ENCODE measurements at regions of chr15 and their contacts with region 1.

Region 1: GRCh38 chr15:33226559-33227181 is 32.2 kb upstream of the FMN1 start:
- DNase-seq: peak; percentile 78
- ATAC-seq: peak; percentile 97
- H3K4me3 Mint-ChIP-seq: no peak overlapping the region
- H3K27ac Mint-ChIP-seq: no peak overlapping the region
- H3K4me1 Mint-ChIP-seq: peaks cover 18% of the 10 kb centered on the region
- H3K27me3 Mint-ChIP-seq: no peaks in the 10 kb centered on the region

Region 2: DNA sequence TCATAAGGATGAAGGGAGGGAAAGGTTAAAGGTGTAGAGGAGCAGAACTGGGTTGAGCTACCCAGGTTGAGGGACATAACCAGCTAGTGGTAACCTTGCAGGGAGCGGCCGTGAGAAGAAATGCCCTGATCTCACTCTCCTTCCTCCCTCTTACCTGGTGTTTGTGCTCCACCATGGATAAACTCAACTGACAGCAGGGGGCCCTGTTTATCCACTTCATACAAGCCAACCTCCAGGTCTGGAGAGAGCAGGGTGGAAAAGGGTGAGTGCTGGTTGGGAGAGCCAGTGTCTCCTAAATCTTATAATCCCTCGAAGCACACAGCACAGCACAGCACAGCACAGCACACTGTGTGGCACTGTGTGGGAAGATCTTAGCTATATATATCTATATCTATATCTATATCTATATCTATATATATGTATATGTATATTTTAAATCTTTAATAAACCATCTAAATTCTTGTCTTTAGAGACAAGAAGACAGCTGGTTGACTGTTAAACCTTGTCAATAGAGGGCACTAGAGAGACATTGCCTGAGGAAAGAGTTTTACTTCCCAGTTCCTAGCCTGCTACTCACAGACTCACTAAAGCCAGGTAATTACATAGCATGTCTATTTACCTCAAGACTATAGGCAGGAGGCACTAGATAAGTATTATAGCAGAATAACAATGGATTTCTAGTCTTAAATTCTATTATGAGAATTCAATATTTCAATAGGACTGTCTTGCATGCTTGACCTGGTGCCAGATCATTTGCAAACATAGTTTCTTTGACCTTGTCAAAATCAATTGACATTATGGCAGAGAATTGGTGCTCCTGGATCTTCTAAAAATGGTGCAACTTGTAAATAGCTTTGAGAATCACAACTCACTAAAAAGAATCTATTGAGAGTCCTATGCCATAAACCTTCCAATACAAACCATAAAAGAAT is 10.5 kb before region 1 on chr15:
- CTCF ChIA-PET with region 1: interaction called, 10 read pairs
- POLR2A ChIA-PET with region 1: no interaction called
- intact Hi-C with region 1: no loop called
- DNase-seq: no peak
- ATAC-seq: peak; percentile 42
- H3K4me3 Mint-ChIP-seq: no peak overlapping the region
- H3K27ac Mint-ChIP-seq: no peak overlapping the region
- H3K4me1 Mint-ChIP-seq: no peaks in the 10 kb centered on the region
- H3K27me3 Mint-ChIP-seq: no peaks in the 10 kb centered on the region

Region 3: GRCh38 chr15:33242669-33243191 is 16.1 kb after region 1 on chr15:
- CTCF ChIA-PET with region 1: interaction called, 6 read pairs
- POLR2A ChIA-PET with region 1: interaction called, 3 read pairs
- intact Hi-C with region 1: loop called in 1 of 2 experiments (anchors 2 kb)
- DNase-seq: no peak
- ATAC-seq: no peak
- H3K4me3 Mint-ChIP-seq: no peak overlapping the region
- H3K27ac Mint-ChIP-seq: peak overlapping the region; percentile 38
- H3K4me1 Mint-ChIP-seq: peaks cover 16% of the 10 kb centered on the region
- H3K27me3 Mint-ChIP-seq: no peaks in the 10 kb centered on the region

Measured in activated CD4-positive, alpha-beta T cell treated with anti-CD3 and anti-CD28 coated beads for 36 hours (primary cell).